ENCODE measurements at regions of chr17 and their contacts with region 1.

Region 1: DNA sequence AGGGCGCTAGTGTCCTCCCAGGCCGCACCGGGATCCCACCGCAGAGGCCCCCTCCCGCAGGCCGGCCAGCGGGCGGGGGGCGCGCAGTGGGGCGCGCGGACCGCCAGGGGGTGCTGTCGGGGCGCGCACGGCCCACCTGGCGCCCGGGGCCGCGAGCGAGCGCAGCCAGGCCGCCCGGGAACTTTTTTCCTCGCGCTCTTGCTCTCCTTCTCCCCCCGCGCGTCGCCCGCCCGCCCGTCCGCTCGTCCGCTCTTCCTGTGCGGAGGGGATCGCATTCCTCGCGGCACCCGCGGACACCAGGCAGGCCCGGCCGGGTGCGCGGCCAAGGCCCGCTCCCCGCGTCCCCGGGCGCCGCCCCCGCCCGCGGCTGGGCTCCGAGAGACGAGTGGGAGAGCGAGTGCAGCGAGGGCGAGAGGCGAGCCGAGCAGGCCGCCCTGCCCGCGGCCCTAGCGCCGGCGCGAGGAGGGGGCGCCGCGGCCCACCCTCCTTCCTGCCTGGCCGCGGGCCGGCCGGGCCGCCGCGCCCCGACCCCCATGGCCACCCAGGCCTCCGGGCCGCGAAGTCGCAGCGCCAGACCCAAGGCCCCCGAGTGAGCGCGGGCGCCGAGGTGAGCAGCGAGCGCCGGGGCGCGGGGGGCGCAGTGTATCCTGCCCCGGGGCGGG is at the start of gene RAI1:
- DNase-seq: peak in 1 of 2 experiments; percentile 83
- H3K4me3 ChIP-seq: peak within 1 kb of the TSS; percentile 34 to 71 (median 38); a peak in 6 of 8 replicates
- H3K27ac ChIP-seq: no peak within 1 kb of the TSS
- H3K4me1 ChIP-seq: peaks cover 4 to 30% (median 22%) of the 10 kb centered on the region in 4 experiments
- H3K27me3 ChIP-seq: peaks cover 70 to 96% (median 94%) of the 10 kb centered on the region in 4 experiments
- CTCF ChIP-seq: peak; percentile 77 to 83 (median 80)
- EP300 ChIP-seq: no peak
- POLR2A ChIP-seq: no peak
- RAD21 ChIP-seq: peak; percentile 41 to 82; a peak in 3 of 4 replicates
- total RNA-seq, gene RAI1: 0.80 and 1.2 TPM in 2 replicates

Region 2: DNA sequence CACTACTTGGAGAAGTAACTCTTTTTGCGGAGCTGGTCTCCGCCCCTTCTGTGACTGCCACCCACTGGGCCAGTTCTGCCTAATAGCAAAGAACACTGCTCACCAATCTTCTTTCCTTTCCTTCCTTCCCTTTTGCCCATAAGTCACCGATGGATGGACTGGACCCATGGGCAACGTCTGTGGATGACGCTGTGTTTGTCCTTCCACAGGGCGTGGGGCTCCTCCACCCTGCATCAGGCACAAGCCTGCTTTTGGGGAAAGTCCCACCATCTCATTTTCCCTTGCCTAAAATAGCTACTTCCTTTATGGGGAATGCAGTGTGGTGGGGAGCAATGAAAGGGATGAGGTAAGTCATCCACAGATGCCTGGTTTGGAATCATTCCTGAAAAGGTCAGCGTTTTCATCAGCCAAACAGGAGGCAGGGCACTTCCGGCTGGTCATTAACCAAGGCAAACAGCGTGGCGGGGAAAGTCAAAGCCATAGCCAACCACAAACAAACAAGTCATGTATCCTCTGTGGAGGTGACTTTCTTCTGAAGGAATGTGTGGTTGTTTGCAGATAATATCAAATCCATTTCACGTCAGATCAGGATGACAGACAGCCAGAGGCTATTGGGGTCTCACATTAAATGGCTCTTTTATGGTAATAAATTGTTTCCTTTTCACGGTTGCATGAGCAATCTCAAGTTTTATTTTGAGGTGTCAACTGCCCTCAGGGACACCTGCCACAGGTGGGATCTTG is 235.2 kb before region 1 on chr17:
- CTCF ChIA-PET with region 1: no interaction called
- POLR2A ChIA-PET with region 1: no interaction called
- DNase-seq: no peak
- H3K4me3 ChIP-seq: no peak overlapping the region
- H3K27ac ChIP-seq: no peak overlapping the region
- H3K4me1 ChIP-seq: peaks cover 0 to 4% (median 2%) of the 10 kb centered on the region in 4 experiments; a peak in 1 of 7 replicates
- H3K27me3 ChIP-seq: no peaks in the 10 kb centered on the region
- CTCF ChIP-seq: no peak
- EP300 ChIP-seq: no peak
- POLR2A ChIP-seq: no peak
- RAD21 ChIP-seq: no peak

Region 3: GRCh38 chr17:17653343-17653742 is 28.0 kb before region 1 on chr17:
- CTCF ChIA-PET with region 1: no interaction called
- POLR2A ChIA-PET with region 1: no interaction called
- DNase-seq: no peak
- H3K4me3 ChIP-seq: no peak overlapping the region
- H3K27ac ChIP-seq: no peak overlapping the region
- H3K4me1 ChIP-seq: no peaks in the 10 kb centered on the region
- H3K27me3 ChIP-seq: no peaks in the 10 kb centered on the region; a peak in 1 of 7 replicates
- CTCF ChIP-seq: no peak
- EP300 ChIP-seq: no peak
- POLR2A ChIP-seq: no peak
- RAD21 ChIP-seq: no peak

Region 4: DNA sequence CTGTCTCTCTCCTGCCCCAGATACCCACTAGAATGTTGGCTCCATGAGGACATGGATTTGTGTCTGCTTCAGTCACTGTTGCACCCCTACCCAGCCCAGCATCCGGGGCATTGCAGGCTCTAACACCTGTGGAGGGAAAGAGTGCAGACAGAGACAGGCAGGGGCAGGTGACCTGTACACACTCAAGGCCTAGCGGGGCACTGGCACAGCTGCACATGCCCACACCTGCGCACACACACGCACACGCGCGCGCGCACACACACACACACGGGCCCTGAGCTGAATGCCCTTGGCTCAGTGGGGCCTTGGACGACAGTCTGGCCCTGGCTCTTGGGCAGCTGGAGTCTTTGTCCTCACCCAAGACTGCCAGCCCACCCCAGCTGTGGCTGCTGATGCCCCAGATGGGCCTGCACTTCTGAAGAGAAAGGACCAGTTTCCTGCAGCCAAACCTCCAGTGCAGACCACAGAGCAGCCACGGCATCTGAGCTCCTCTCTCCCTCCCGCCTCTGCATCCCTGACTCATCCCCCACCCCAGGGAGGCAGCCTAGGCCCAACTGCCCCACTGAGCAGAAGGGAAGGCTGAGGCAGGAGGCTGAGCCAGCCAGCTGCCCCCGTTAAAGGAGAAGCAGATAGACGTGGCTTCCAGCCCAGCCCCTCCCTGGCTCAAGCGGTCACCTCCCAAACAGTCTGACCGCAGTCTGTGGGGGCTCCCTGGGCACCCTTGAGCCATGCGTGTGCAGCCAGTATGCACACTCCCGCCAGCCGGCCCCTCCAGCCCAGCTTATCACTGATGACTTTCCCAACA is 12.3 kb before region 1 on chr17:
- CTCF ChIA-PET with region 1: interaction called, 15 read pairs
- POLR2A ChIA-PET with region 1: interaction called, 3 read pairs
- DNase-seq: no peak
- H3K4me3 ChIP-seq: no peak overlapping the region
- H3K27ac ChIP-seq: no peak overlapping the region
- H3K4me1 ChIP-seq: no peaks in the 10 kb centered on the region; a peak in 1 of 7 replicates
- H3K27me3 ChIP-seq: peaks cover 0 to 9% (median 6%) of the 10 kb centered on the region in 4 experiments; a peak in 5 of 7 replicates
- CTCF ChIP-seq: no peak
- EP300 ChIP-seq: no peak
- POLR2A ChIP-seq: no peak
- RAD21 ChIP-seq: no peak

Region 5: GRCh38 chr17:17700251-17700969 is 19.1 kb after region 1 on chr17:
- CTCF ChIA-PET with region 1: interaction called, 14 read pairs
- POLR2A ChIA-PET with region 1: interaction called, 7 read pairs
- DNase-seq: peak; percentile 62 to 90
- H3K4me3 ChIP-seq: peak overlapping the region in 3 of 4 experiments; percentile 0 to 47 (median 3); a peak in 4 of 8 replicates
- H3K27ac ChIP-seq: no peak overlapping the region
- H3K4me1 ChIP-seq: peaks cover 0 to 38% (median 31%) of the 10 kb centered on the region in 4 experiments; a peak in 6 of 7 replicates
- H3K27me3 ChIP-seq: peaks cover 85 to 99% (median 97%) of the 10 kb centered on the region in 4 experiments
- CTCF ChIP-seq: no peak
- EP300 ChIP-seq: peak in 1 of 2 experiments; percentile 92; a peak in 1 of 3 replicates
- POLR2A ChIP-seq: no peak
- RAD21 ChIP-seq: no peak; a peak in 1 of 4 replicates

Region 6: DNA sequence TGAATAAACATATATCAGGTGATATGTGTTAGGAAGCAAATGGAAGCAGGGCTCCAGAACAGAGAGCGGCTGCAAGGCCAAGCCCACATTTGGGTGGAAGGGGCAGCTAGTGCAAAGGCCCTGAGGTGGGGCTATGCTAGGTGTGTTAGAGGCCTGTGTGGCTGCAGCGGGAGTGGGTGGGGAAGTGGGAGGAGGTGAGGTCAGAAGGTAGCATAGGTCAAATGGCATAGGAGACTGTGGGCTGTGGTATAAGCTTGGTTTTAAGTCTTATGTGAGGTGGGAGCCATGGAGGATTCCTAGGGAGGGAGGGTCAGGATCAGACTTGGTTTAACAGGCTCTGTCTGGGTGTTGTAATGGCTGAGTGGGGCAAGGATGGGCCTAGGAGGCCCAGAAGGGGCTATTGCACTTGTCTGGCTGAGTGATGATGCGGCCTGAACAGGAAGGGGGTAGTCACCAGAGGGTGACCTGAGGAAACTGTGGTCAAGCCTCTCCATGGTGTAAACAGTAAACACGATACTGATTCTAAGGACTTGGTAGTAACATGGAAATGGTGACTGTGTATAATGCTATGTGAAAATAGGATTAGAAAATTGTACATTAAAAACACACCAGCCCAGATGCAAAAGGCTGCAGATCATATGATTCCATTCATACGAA is 31.1 kb after region 1 on chr17:
- CTCF ChIA-PET with region 1: interaction called, 13 read pairs
- POLR2A ChIA-PET with region 1: no interaction called
- DNase-seq: no peak
- H3K4me3 ChIP-seq: 0 out of 8 replicates have a peak overlapping the region, but pooled peaks of 1 of the 4 experiments have one; percentile 28
- H3K27ac ChIP-seq: no peak overlapping the region
- H3K4me1 ChIP-seq: peaks cover 13 to 37% (median 22%) of the 10 kb centered on the region in 4 experiments
- H3K27me3 ChIP-seq: peaks cover 6 to 66% (median 47%) of the 10 kb centered on the region in 4 experiments
- CTCF ChIP-seq: no peak
- EP300 ChIP-seq: no peak
- POLR2A ChIP-seq: no peak
- RAD21 ChIP-seq: no peak